ENCODE measurements at regions of chr19 and their contacts with region 1.

Region 1: DNA sequence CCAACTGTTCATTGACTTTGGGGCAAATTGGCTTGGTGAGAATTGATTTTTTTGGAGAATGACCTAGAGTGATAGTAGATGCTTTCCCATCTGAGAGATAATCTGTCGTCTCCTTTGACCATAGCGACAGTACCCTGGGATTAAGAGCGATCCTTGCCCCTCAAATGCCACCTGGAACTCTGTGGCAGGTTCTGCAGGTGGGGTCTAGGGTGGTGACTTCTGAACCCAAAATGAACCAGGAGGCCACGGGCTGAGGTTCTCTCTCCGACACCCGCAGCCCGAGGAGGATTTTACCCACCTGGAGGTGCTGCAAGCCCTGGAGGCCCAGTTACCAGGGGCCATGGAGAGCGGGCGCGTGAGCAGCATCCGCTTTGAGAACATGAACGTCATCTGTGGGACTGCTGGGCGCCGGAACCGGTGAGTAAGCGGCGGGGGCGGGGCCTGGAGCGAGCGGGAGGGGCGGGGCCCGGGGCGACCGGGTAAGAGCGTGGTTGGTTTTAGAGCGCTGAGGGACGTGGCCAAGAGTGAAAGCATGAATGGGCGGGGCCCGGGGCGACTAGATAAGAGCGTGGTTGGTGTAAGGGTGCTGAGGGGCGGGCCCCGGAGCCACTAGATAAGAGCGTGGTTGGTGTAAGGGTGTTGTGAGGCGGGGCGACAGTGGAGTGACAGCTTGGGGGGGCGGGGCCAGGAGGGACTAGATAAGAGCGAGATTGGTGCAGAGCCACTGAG is 8.6 kb downstream of the C19orf81 start:
- DNase-seq: peak; percentile 96
- H3K4me3 Mint-ChIP-seq: peak overlapping the region; percentile 81
- H3K27ac Mint-ChIP-seq: peak overlapping the region; percentile 73
- H3K4me1 Mint-ChIP-seq: peaks cover 19% of the 10 kb centered on the region
- H3K27me3 Mint-ChIP-seq: peaks cover 73% of the 10 kb centered on the region

Region 2: GRCh38 chr19:50368649-50369570 is 289.0 kb before region 1 on chr19:
- CTCF ChIA-PET with region 1: no interaction called
- intact Hi-C with region 1: loop called (anchors 10 kb)
- DNase-seq: peak; percentile 89
- H3K4me3 Mint-ChIP-seq: peak overlapping the region; percentile 88
- H3K27ac Mint-ChIP-seq: peak overlapping the region; percentile 88
- H3K4me1 Mint-ChIP-seq: peaks cover 35% of the 10 kb centered on the region
- H3K27me3 Mint-ChIP-seq: no peaks in the 10 kb centered on the region

Region 3: GRCh38 chr19:50398675-50399367 is 259.1 kb before region 1 on chr19:
- CTCF ChIA-PET with region 1: no interaction called
- intact Hi-C with region 1: no loop called
- DNase-seq: no peak
- H3K4me3 Mint-ChIP-seq: no peak overlapping the region
- H3K27ac Mint-ChIP-seq: no peak overlapping the region
- H3K4me1 Mint-ChIP-seq: no peaks in the 10 kb centered on the region
- H3K27me3 Mint-ChIP-seq: no peaks in the 10 kb centered on the region

Region 4: DNA sequence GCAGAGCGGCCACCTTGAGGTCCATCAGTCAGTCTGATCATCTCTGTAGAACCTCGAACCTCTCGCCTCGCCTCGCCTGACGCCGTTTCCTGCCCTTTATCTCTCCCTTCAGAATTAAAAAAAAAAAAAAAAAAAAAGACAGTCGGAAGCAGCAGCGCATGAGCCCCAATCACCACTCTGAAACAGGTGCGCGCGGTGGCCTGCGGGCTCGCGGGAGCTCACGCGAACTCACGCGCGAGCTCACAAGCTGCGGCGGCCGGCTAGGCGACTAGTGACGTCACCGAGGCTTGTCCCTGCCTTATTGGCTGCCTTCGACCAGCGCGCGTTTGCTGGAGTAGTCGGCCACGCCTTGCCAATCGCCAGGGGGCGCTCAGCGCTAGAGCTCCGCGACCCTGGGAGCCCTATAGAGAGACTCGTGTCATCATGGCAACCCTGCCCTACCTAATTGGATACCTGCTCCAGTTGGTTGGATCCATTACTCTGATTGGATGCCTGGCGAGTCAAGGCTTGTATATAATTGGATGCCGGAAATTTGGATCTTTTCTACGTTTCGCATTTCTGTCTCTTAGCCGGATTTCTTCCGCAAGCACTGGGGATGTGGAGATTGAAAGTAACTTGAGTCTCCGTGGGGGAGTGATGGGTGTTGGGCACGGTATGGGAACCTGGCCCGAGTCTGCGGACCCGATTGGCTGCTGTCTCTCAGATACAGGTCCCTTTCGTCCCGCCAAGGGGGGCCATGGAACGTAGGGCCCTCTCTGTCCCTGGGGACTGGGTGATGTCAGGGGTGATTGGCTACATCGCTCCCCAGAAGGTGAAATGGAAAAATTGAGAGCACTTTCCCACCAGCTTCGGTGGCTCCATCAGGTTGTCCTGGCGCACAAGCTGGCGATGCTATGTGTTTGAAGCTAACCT is 49.7 kb before region 1 on chr19:
- CTCF ChIA-PET with region 1: interaction called, 4 read pairs
- intact Hi-C with region 1: loop called (anchors 2 kb)
- DNase-seq: peak; percentile 91
- H3K4me3 Mint-ChIP-seq: no peak overlapping the region
- H3K27ac Mint-ChIP-seq: no peak overlapping the region
- H3K4me1 Mint-ChIP-seq: peaks cover 10% of the 10 kb centered on the region
- H3K27me3 Mint-ChIP-seq: peaks cover 32% of the 10 kb centered on the region

Region 5: GRCh38 chr19:50724522-50725217 is 66.8 kb after region 1 on chr19:
- CTCF ChIA-PET with region 1: no interaction called
- intact Hi-C with region 1: loop called (anchors 2 kb)
- DNase-seq: peak; percentile 99
- H3K4me3 Mint-ChIP-seq: peak overlapping the region; percentile 74
- H3K27ac Mint-ChIP-seq: no peak overlapping the region
- H3K4me1 Mint-ChIP-seq: peaks cover 27% of the 10 kb centered on the region
- H3K27me3 Mint-ChIP-seq: peaks cover 51% of the 10 kb centered on the region

Measured in activated naive CD4-positive, alpha-beta T cell treated with anti-CD3 and anti-CD28 coated beads for 36 hours (primary cell).